ENCODE measurements at regions of chr21 and their contacts with region 1.

Region 1: GRCh38 chr21:37267269-37268184 is at the start of gene VPS26C:
- DNase-seq: peak; percentile 99
- H3K4me3 ChIP-seq: peak within 1 kb of the TSS; percentile 74 to 83 (median 75)
- H3K27ac ChIP-seq: peak within 1 kb of the TSS; percentile 96 to 98 (median 98)
- H3K4me1 ChIP-seq: peaks cover 5 to 26% (median 11%) of the 10 kb centered on the region in 4 donors
- H3K27me3 ChIP-seq: no peaks in the 10 kb centered on the region
- CTCF ChIP-seq: peak in 1 of 5 experiments; percentile 9
- EP300 ChIP-seq: peak; percentile 47
- POLR2A ChIP-seq: peak; percentile 95
- total RNA-seq, gene VPS26C: 86.5 to 146 (median 108) TPM

Region 2: DNA sequence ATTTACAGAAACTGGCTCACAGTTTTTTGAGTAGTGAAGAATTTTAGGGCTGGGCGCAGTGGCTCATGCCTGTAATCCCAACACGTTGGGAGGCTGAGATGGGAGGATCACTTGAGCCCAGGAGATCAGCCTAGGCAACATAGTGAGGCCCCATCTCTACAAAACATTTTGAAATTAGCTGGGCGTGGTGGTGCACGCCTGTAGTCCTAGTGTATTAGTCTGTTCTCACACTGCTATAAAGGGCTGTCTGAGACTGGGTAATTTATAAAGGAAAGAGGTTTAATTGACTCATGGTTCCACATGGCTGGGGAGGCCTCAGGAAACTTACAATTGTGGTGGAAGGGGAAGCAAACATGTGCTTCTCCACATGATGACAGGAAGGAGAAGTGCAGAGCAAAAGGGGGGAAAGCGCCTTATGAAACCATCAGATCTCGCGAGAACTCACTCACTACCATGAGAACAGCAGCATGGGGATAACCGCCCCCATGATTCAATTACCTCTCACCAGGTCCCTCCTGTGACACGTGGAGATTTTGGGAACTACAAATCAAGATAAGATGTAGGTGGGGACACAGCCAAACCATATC is 74.6 kb after region 1 on chr21:
- in situ Hi-C with region 1: no loop called
- intact Hi-C with region 1: no loop called
- DNase-seq: no peak
- H3K4me3 ChIP-seq: no peak overlapping the region
- H3K27ac ChIP-seq: no peak overlapping the region
- H3K4me1 ChIP-seq: peaks cover 0 to 16% (median 5%) of the 10 kb centered on the region in 4 donors
- H3K27me3 ChIP-seq: no peaks in the 10 kb centered on the region
- CTCF ChIP-seq: no peak
- EP300 ChIP-seq: no peak
- POLR2A ChIP-seq: no peak

Region 3: GRCh38 chr21:37496972-37497371 is 229.4 kb after region 1 on chr21:
- in situ Hi-C with region 1: loop called in 1 of 4 experiments (anchors 25 kb)
- intact Hi-C with region 1: no loop called
- DNase-seq: no peak
- H3K4me3 ChIP-seq: no peak overlapping the region
- H3K27ac ChIP-seq: no peak overlapping the region
- H3K4me1 ChIP-seq: no peaks in the 10 kb centered on the region
- H3K27me3 ChIP-seq: no peaks in the 10 kb centered on the region
- CTCF ChIP-seq: no peak
- EP300 ChIP-seq: no peak
- POLR2A ChIP-seq: no peak

Region 4: GRCh38 chr21:37563641-37564340 is 296.3 kb after region 1 on chr21:
- in situ Hi-C with region 1: no loop called
- intact Hi-C with region 1: loop called (anchors 10 kb)
- DNase-seq: peak; percentile 94
- H3K4me3 ChIP-seq: peak overlapping the region; percentile 67 to 92 (median 76)
- H3K27ac ChIP-seq: peak overlapping the region; percentile 91
- H3K4me1 ChIP-seq: peaks cover 5 to 22% (median 11%) of the 10 kb centered on the region in 4 donors
- H3K27me3 ChIP-seq: no peaks in the 10 kb centered on the region
- CTCF ChIP-seq: peak; percentile 26 to 57 (median 37)
- EP300 ChIP-seq: no peak
- POLR2A ChIP-seq: peak; percentile 66

Measured in transverse colon (tissue), 4 donors.